Heart left ventricle (tissue), 16 donors: ENCODE measurements at regions of chr9 and their contacts with region 1.

Region 1: GRCh38 chr9:72533337-72533736 is 11.9 kb downstream of the TMC1 start:
- DNase-seq: no peak
- ATAC-seq: no peak
- H3K4me3 ChIP-seq: no peak overlapping the region
- H3K27ac ChIP-seq: peak overlapping the region in 1 of 12 donors; percentile 66
- H3K4me1 ChIP-seq: no peaks in the 10 kb centered on the region
- H3K27me3 ChIP-seq: no peaks in the 10 kb centered on the region
- CTCF ChIP-seq: no peak
- POLR2A ChIP-seq: no peak

Region 2: GRCh38 chr9:72473474-72474261 is 59.7 kb before region 1 on chr9:
- intact Hi-C with region 1: no loop called
- DNase-seq: no peak
- ATAC-seq: no peak
- H3K4me3 ChIP-seq: no peak overlapping the region
- H3K27ac ChIP-seq: peak overlapping the region in 1 of 12 donors; percentile 48
- H3K4me1 ChIP-seq: peaks cover 0 to 24% (median 7%) of the 10 kb centered on the region in 12 donors
- H3K27me3 ChIP-seq: no peaks in the 10 kb centered on the region
- CTCF ChIP-seq: no peak
- POLR2A ChIP-seq: no peak

Region 3: DNA sequence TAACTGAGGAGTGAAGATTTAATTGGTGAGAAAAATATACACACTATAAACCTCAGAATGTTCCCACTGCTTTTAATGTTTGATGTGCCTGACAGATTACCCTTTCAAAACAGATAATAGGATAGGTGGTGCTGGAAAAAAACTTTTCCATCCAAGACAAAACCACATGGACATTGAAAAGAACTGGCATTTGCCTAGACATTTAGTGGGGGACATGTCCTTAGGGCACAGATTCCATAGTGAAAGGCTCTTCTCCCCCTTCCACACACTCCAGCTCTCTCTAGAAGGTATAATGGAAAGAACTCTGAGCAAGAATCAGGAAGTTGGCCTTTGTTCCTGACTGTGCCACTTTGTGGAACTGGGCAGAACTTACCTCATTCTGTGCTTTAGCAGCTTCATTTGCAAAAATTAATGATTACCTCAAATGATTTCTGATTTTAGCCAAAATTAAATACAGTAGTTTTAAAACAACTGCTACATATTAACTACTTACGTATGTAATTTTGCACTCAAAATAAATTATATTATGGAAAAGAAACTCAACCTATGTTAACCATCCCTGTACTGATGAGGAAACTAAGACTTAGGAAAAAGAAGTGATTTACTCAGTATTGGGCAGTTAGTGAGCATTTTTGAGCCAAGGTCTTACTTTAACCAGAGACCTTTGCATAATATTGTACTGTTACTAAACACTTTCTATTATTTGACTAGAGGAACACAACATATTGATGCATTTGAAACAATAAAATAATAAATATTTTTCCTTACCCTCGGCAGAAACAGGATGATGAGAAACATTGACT is 31.3 kb after region 1 on chr9:
- intact Hi-C with region 1: loop called in 1 of 10 experiments (anchors 5 kb)
- DNase-seq: no peak
- ATAC-seq: no peak
- H3K4me3 ChIP-seq: no peak overlapping the region
- H3K27ac ChIP-seq: no peak overlapping the region
- H3K4me1 ChIP-seq: no peaks in the 10 kb centered on the region
- H3K27me3 ChIP-seq: no peaks in the 10 kb centered on the region
- CTCF ChIP-seq: no peak
- POLR2A ChIP-seq: no peak